ENCODE measurements at regions of chr2 and their contacts with region 1.

Region 1: DNA sequence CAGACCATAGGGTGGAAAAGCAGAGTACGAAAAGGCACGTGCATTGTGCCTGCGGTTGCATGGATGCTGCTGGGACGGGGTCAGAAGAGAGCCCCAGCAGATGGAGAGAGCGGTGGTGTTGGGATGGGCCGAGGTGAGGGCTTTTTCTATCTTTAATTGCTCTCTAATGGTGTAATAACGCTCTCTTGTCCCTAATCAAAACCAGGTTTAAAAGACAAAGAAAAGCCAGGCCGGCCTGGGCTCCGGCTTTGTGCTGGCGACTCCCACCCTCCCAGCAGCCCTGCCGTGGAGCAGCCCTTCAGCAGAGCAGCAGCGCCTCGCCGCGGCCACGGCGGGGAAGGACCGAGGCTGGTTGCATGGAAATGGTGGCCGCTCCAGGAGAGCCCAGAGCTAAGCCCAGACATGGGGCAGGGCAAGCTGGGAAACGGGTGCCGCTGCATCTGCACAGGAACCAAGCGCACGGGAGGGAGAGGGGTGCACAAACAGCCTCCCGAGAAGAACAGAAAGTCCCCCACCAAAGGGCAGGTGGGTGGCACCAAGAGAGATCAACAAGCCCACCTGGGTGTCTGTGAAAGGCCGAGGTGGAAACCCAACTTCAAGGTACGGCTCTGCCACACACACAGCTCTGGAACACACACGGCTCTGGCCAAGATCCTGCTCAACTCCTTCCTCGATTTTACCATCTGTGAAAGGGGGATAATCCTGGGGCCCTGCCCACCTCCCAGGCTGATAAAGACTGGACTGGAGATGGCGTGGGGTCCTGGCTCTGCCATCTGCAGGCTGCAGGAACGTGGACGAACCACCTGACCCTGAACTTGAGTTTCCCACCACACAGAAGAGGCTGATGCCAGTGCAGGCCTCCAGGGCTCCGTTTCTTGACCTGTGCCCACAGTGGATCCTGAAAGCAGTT is 15.0 kb downstream of the HS1BP3 start:
- DNase-seq: peak; percentile 60
- H3K4me3 Mint-ChIP-seq: no peak overlapping the region
- H3K27ac Mint-ChIP-seq: no peak overlapping the region
- H3K4me1 Mint-ChIP-seq: no peaks in the 10 kb centered on the region
- H3K27me3 Mint-ChIP-seq: no peaks in the 10 kb centered on the region

Region 2: GRCh38 chr2:20446917-20447436 is 189.0 kb before region 1 on chr2 and contains the start of gene RHOB:
- CTCF ChIA-PET with region 1: interaction called, 63 read pairs
- intact Hi-C with region 1: loop called (anchors 1 kb)
- DNase-seq: peak; percentile 91
- H3K4me3 Mint-ChIP-seq: peak within 1 kb of the TSS; percentile 76
- H3K27ac Mint-ChIP-seq: no peak within 1 kb of the TSS
- H3K4me1 Mint-ChIP-seq: peaks cover 11% of the 10 kb centered on the region
- H3K27me3 Mint-ChIP-seq: peaks cover 3% of the 10 kb centered on the region
- total RNA-seq, gene RHOB: 1.8 to 2.0 TPM

Region 3: DNA sequence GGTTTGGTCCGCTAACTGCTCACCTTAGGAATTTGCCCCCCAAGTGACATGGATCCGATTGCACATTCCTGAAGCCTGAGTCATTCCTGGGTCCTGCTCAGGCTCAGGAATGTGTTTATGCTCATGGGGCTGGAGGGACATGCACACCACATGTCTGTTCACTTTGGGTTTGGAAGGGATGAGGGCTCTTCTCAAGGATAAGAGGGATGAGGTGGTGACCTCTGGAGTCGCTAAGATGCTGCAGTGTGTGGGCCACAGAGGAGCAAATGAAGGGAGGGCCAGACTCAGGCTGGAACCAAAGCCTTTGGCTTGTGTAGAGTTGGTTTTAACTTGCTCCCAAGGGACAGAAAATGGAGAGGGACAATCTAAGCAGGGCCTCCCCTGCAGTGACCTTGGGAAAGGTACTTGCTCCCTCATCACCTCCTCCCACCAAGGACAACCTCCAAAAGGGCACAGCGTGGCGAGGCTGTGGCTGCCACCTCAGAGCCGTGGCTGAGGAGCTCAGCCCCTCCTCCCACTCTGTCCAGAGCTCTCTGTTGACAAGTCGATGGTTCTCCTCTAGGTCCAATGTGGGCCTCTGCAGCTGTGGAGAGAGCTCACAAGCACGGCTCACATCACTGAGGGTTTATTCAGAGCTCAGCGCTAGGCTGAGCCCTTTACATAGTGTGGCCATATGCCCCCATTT is 51.2 kb before region 1 on chr2:
- CTCF ChIA-PET with region 1: no interaction called
- intact Hi-C with region 1: no loop called
- DNase-seq: no peak
- H3K4me3 Mint-ChIP-seq: no peak overlapping the region
- H3K27ac Mint-ChIP-seq: no peak overlapping the region
- H3K4me1 Mint-ChIP-seq: no peaks in the 10 kb centered on the region
- H3K27me3 Mint-ChIP-seq: no peaks in the 10 kb centered on the region

Region 4: DNA sequence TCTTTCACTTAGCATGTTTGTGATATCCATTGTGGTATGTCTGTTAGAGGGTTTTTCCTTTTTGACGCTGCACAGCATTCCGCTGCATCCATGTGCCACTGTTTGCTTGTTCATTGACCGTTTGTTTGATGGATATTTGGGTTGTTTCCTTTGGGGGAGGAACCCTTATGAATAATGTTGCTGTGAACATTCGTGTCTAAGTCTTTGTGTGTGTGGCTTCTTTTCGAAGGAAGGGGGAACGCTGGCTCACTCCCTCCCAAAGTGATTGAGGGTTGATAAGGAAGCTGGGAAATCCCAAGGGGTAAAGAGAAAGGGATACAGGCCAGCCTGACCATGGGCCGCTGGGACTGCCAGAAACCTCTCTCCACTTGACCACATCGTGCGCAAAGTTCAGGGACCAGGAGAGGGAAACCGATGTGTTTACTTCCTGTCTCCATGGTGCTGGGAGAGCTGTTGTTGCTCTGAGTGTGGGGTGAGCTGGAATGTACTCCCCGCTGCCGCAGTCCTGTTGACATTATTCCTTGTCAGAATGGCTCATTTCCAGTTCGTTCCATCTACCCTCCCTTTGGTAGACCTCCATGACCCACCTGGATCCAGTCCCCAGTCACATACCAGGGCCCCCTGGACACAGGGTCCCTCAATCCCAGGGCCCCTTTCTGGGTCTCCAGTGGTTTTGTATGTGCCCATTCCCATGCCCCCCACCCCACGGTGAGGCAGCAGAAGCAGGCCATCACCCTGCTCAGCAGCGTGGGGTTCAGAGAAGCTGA is 24.7 kb before region 1 on chr2:
- CTCF ChIA-PET with region 1: no interaction called
- intact Hi-C with region 1: no loop called
- DNase-seq: no peak
- H3K4me3 Mint-ChIP-seq: no peak overlapping the region
- H3K27ac Mint-ChIP-seq: no peak overlapping the region
- H3K4me1 Mint-ChIP-seq: no peaks in the 10 kb centered on the region
- H3K27me3 Mint-ChIP-seq: no peaks in the 10 kb centered on the region

Measured in activated naive CD4-positive, alpha-beta T cell treated with anti-CD3 and anti-CD28 coated beads for 36 hours (primary cell).